Activated naive CD4-positive, alpha-beta T cell treated with anti-CD3 and anti-CD28 coated beads for 36 hours (primary cell): ENCODE measurements at regions of chr3 and their contacts with region 1.

Region 1: GRCh38 chr3:196837819-196838420 is 29.8 kb upstream of the SENP5 start:
- DNase-seq: peak; percentile 90
- H3K4me3 Mint-ChIP-seq: no peak overlapping the region
- H3K27ac Mint-ChIP-seq: no peak overlapping the region
- H3K4me1 Mint-ChIP-seq: no peaks in the 10 kb centered on the region
- H3K27me3 Mint-ChIP-seq: no peaks in the 10 kb centered on the region

Region 2: DNA sequence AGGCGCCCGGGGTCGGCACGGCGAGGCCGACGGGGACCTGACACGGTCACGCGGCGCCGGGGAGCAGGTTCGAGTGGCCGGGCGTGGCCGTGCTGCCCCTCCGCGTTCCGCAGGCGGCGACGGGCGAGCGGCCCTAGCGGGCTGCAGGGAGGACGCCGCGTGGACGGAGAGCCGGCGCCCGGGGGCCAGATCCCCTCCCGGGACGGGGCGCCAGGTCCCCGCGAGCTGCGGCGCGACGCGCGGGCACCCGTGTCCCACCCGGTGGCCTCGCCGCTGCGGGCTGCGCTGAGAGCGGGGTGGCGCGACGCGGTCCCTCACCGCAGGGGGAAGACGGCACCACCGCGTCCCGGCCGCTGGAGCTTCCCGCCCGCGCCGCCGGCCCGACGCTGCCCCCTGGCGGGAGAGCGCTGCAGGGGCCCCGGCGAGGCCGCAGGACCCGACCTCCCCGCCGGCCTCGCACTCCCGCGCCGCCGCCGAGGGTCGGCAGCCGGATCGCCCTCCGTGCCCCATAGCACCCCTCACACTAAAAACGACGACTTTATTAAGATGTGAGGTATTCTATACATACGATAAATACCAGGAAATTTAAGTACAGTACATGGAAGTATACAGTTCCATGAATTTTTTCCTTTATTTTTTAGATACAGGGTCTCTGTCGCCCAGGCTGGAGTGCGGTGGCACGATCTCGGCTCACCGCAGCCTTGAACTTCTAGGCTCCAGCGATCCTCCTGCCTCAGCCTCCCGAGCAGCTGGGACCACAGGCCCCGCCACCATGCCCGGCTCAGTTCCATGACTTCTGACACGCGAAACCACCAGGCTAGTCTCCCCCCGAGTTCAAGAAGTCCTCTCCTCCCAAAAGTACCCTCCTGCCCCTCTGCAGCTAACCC is 132.0 kb after region 1 on chr3:
- CTCF ChIA-PET with region 1: interaction called, 27 read pairs
- intact Hi-C with region 1: loop called (anchors 1 kb)
- DNase-seq: peak; percentile 68
- H3K4me3 Mint-ChIP-seq: peak overlapping the region; percentile 70
- H3K27ac Mint-ChIP-seq: no peak overlapping the region
- H3K4me1 Mint-ChIP-seq: peaks cover 7% of the 10 kb centered on the region
- H3K27me3 Mint-ChIP-seq: peaks cover 22% of the 10 kb centered on the region

Region 3: DNA sequence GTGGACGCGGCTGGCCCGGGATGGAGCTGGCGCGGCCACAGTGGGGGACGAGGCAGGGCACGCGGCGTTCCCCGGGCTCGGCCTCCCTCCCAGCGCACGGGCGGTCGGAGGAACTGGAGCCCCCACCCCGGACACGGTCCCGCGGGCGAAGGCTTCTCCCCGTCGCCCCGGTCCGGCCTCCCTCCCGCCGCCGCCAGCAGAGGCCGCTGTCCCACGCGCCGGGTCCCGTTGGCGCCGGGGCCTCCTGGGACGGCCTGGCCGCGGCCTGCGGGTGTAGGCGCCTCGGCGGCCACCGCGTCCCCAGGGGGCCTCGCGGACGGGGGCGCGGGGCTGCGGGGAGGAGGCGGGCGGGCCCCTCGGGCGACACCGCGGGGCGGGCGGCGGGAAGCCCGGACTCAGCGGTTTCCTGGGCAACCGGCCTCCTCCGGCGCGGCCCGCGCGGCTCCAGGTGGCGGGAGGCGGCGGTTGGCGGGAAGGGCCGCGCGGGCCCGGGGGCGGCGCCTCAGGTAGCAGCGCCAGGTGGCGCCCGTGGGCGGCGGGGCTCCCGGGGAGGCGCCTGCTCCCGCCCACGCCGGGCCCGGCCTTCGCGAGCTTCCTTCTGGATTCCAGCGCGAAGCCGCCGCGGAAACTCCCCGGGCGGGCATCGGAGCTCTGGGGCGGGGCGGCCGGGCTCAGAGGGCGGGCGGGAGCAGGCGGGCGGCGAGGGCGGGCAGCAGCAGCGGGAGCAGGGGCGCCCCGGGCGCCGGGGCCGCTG is 165.0 kb after region 1 on chr3:
- CTCF ChIA-PET with region 1: no interaction called
- intact Hi-C with region 1: no loop called
- DNase-seq: peak; percentile 92
- H3K4me3 Mint-ChIP-seq: no peak overlapping the region
- H3K27ac Mint-ChIP-seq: no peak overlapping the region
- H3K4me1 Mint-ChIP-seq: peaks cover 8% of the 10 kb centered on the region
- H3K27me3 Mint-ChIP-seq: no peaks in the 10 kb centered on the region